MCF 10A (cell line): ENCODE measurements at regions of chr2 and their contacts with region 1.

Region 1: DNA sequence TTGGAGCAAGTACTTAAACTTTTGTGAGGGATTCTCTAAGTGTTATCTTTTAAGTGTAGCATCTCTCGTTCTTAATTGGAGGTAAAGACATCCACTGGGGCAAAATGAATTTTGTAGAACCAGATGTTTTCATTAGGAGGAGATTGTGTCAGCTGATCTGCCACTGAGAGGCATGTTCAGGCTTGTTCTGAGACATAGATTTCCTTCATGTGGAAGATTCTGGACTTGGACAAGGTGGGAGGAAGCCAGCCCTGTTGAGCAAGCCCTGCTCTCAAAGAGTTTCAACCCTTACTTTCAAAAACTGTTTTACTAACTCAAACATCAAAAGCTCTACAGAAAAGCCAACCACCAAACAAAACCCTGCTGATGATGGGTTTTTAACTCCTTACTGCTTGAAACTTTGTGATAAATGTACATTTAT is 6.5 kb downstream of the MAP4K4 start:
- DNase-seq: peak; percentile 83
- H3K4me3 Mint-ChIP-seq: peak overlapping the region; percentile 22
- H3K27ac Mint-ChIP-seq: peak overlapping the region; percentile 98
- H3K4me1 Mint-ChIP-seq: peaks cover 42% of the 10 kb centered on the region
- H3K27me3 Mint-ChIP-seq: no peaks in the 10 kb centered on the region
- CTCF ChIP-seq: no peak

Region 2: DNA sequence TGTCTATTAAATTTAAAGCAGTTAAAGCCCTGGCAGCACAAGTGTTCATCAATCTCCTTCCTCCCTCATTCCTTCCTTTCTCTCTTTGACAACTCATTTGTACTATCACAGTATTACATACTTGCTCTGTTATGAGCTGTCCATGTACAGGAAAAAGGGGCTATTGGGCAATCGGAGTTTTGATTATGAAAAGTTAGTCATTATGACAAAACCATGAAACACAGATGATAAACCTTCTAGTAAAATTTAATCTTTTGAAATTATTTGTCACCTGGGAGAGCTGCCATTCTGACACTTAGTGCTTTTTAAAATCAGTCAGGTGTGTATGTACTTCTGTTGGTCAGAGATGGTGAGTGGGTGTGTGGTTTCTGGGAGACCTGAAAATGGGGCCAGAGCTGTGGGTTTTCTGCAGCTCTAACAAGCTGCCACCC is 32.8 kb after region 1 on chr2:
- CTCF ChIA-PET with region 1: interaction called, 9 read pairs
- POLR2A ChIA-PET with region 1: interaction called, 73 read pairs
- intact Hi-C with region 1: loop called (anchors 2 kb)
- DNase-seq: peak; percentile 91
- H3K4me3 Mint-ChIP-seq: peak overlapping the region; percentile 37
- H3K27ac Mint-ChIP-seq: peak overlapping the region; percentile 83
- H3K4me1 Mint-ChIP-seq: peaks cover 67% of the 10 kb centered on the region
- H3K27me3 Mint-ChIP-seq: no peaks in the 10 kb centered on the region
- CTCF ChIP-seq: no peak

Region 3: GRCh38 chr2:101746388-101746723 is 42.3 kb after region 1 on chr2:
- CTCF ChIA-PET with region 1: interaction called, 9 read pairs
- POLR2A ChIA-PET with region 1: interaction called, 73 read pairs
- intact Hi-C with region 1: no loop called
- DNase-seq: peak; percentile 57
- H3K4me3 Mint-ChIP-seq: peak overlapping the region; percentile 29
- H3K27ac Mint-ChIP-seq: peak overlapping the region; percentile 92
- H3K4me1 Mint-ChIP-seq: peaks cover 56% of the 10 kb centered on the region
- H3K27me3 Mint-ChIP-seq: no peaks in the 10 kb centered on the region
- CTCF ChIP-seq: no peak